Activated CD4-positive, alpha-beta memory T cell treated with anti-CD3 and anti-CD28 coated beads for 36 hours (primary cell): ENCODE measurements at regions of chr7 and their contacts with region 1.

Region 1: DNA sequence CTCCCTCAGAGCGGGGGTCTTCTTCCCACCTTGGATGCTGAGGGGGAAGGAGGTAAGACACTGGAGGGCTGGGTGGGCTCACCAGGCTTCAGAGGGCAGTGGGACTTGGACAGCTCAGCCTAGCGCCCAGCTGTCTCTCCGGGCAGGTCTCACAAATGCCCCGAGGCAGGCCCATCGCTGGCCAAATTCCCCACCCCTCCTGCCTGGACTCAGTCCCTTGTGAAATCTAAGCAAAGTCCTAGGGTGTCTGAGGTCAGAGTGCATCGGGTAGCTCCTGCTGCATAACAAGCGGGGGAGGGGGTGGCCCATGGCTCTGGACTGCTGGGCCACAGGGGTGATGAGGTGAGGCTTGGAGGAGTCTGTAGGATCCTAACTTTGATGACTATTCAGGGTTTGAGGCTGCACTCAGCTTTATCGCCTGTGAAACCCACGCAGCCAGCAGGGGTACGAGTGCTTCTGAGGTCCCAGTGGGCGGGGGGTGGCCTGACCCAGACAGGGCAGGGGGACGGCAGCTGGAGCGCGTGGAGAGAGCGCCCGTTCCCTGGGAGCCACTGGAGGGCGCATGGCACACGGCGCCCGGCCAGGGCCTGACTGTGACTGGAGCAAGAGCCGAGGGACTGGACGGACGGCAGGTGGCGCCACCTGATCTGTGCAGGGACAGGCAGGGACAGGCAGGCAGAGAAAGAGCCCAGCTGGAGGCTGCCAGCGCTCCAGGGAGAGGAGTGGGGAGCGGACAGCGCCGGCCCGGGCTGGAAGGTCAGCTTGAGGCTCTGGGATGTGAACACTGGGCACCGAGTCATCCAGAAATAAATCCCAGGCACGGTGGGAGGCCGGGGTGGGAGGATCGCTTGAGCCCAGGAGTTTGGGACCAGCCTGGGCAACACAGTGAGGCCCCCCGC is 10.0 kb downstream of the CYP2W1 start:
- DNase-seq: peak; percentile 96
- H3K4me3 Mint-ChIP-seq: no peak overlapping the region
- H3K27ac Mint-ChIP-seq: no peak overlapping the region
- H3K4me1 Mint-ChIP-seq: no peaks in the 10 kb centered on the region
- H3K27me3 Mint-ChIP-seq: no peaks in the 10 kb centered on the region

Region 2: DNA sequence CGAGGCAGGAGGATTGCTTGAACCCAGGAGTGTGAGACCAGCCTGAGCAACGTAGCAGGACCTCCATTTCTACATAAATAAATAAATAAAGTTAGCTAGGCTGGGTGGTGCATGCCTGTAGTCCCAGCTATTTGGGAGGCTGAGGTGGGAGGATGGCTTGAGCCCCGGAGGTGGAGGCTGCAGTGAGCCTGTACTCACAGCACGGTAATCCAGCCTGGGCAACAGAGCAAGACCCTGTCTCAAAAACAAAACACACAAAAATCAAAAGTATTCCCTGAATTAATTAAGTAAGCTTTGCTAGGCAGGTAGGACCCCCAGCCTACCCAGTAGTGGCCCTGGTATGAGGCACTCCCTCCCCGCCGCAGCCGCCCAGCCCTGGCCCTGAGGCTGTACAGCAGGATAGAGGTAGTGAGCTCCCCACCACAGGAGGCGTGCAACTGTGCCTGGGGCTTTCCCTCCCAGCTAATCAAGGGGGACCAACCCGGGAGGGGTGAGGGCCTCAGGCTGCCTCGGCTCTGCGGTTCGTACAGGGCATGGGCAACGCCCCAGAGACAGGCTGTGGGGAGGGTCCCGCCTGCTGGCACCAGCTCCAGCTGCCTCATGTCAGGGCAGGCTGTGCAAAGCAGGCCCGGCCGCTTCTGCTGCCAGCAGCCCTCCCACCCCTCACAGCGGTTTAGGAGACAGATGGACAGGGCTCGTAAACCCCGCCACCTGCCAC is 11.0 kb before region 1 on chr7:
- CTCF ChIA-PET with region 1: interaction called, 53 read pairs
- POLR2A ChIA-PET with region 1: no interaction called
- intact Hi-C with region 1: no loop called
- DNase-seq: no peak
- H3K4me3 Mint-ChIP-seq: no peak overlapping the region
- H3K27ac Mint-ChIP-seq: no peak overlapping the region
- H3K4me1 Mint-ChIP-seq: no peaks in the 10 kb centered on the region
- H3K27me3 Mint-ChIP-seq: no peaks in the 10 kb centered on the region

Region 3: GRCh38 chr7:1020849-1021251 is 27.9 kb after region 1 on chr7:
- CTCF ChIA-PET with region 1: interaction called, 15 read pairs
- POLR2A ChIA-PET with region 1: interaction called, 3 read pairs
- intact Hi-C with region 1: loop called (anchors 5 kb)
- DNase-seq: no peak
- H3K4me3 Mint-ChIP-seq: no peak overlapping the region
- H3K27ac Mint-ChIP-seq: no peak overlapping the region
- H3K4me1 Mint-ChIP-seq: peaks cover 8% of the 10 kb centered on the region
- H3K27me3 Mint-ChIP-seq: no peaks in the 10 kb centered on the region

Region 4: GRCh38 chr7:1059200-1060091 is 66.5 kb after region 1 on chr7:
- CTCF ChIA-PET with region 1: interaction called, 300 read pairs
- POLR2A ChIA-PET with region 1: interaction called, 4 read pairs
- intact Hi-C with region 1: no loop called
- DNase-seq: peak; percentile 39
- H3K4me3 Mint-ChIP-seq: no peak overlapping the region
- H3K27ac Mint-ChIP-seq: no peak overlapping the region
- H3K4me1 Mint-ChIP-seq: peaks cover 20% of the 10 kb centered on the region
- H3K27me3 Mint-ChIP-seq: no peaks in the 10 kb centered on the region

Region 5: GRCh38 chr7:1086588-1087464 is 93.9 kb after region 1 on chr7:
- CTCF ChIA-PET with region 1: interaction called, 16 read pairs
- POLR2A ChIA-PET with region 1: no interaction called
- intact Hi-C with region 1: no loop called
- DNase-seq: peak; percentile 81
- H3K4me3 Mint-ChIP-seq: peak overlapping the region; percentile 54
- H3K27ac Mint-ChIP-seq: no peak overlapping the region
- H3K4me1 Mint-ChIP-seq: peaks cover 14% of the 10 kb centered on the region
- H3K27me3 Mint-ChIP-seq: no peaks in the 10 kb centered on the region

Region 6: DNA sequence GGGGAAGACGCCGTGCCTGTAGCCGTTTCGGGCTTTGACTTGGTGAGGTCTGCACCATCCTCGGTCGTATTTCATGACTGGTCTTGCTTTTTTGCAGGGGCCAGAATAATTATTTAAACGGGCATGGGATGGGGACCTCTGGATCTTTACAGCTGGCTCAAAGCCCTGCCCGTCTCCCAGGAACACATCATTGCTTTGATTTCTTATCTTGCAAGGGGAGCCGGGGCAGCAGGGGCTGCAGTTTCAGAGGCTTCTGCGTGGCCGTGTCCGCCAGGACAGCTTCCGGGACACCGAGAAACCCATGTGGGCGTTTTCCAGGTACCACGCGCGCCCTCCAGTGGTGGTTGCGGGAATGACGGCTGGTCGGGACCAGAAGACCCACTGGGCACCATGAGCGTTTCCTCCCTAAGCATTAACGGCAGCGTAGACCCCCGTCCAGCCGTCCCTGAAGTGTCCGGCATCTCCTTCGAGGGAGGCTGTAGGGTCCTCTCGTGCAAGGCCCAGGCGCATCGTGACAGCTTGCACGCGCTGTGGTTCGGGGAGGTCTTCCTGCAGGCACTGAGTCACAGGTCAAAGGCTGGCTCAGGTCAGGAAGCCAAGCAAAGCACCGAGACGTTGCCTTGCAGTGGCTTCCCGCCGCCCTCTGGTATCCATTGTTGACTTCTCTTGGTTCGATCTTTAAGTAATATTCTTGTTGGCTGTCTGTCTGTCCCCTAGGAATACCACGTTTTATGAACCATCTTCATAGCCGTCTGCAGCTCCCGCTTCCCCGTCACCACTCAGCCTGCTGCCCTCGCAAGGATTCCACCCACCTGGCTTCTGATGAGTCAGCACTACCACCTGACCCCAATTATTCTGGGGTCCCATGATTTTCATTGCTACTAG is 183.3 kb after region 1 on chr7:
- CTCF ChIA-PET with region 1: interaction called, 31 read pairs
- POLR2A ChIA-PET with region 1: interaction called, 3 read pairs
- intact Hi-C with region 1: loop called (anchors 2 kb)
- DNase-seq: peak; percentile 91
- H3K4me3 Mint-ChIP-seq: peak overlapping the region; percentile 52
- H3K27ac Mint-ChIP-seq: peak overlapping the region; percentile 42
- H3K4me1 Mint-ChIP-seq: peaks cover 11% of the 10 kb centered on the region
- H3K27me3 Mint-ChIP-seq: peaks cover 14% of the 10 kb centered on the region